ENCODE measurements at regions of chr14 and their contacts with region 1.

Region 1: GRCh38 chr14:65958664-65959562 is 527.3 kb upstream of the CCDC196 start:
- DNase-seq: peak in 1 of 2 experiments; percentile 50
- H3K4me3 ChIP-seq: no peak overlapping the region
- H3K27ac ChIP-seq: no peak overlapping the region
- H3K4me1 ChIP-seq: peaks cover 3 to 13% (median 9%) of the 10 kb centered on the region in 4 experiments
- H3K27me3 ChIP-seq: no peaks in the 10 kb centered on the region
- CTCF ChIP-seq: peak in 2 of 3 experiments; percentile 45 to 58; a peak in 2 of 4 replicates
- EP300 ChIP-seq: no peak
- POLR2A ChIP-seq: no peak
- RAD21 ChIP-seq: peak; percentile 61 to 72

Region 2: DNA sequence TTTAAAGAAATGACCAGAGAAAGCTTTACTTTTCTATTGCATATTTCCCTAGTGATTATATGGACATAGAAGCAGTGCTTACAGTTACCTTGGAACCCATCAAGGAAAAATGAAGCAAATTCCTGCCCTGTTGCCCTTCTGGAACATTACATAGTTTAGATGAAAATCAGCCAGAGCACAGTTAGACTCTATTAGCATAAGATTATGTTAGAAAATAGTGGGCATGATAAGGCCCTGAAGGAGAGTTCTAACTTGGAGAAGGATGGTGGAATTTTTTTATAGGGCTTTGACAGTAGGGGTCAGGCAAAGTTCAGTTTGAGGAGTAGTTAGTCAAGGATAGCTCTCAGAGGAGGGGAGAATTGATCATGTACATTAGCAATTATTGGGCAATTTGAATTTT is 472.0 kb before region 1 on chr14:
- CTCF ChIA-PET with region 1: interaction called, 15 read pairs
- POLR2A ChIA-PET with region 1: no interaction called
- DNase-seq: no peak
- H3K4me3 ChIP-seq: no peak overlapping the region
- H3K27ac ChIP-seq: no peak overlapping the region
- H3K4me1 ChIP-seq: peaks cover 0 to 13% (median 6%) of the 10 kb centered on the region in 4 experiments; a peak in 4 of 7 replicates
- H3K27me3 ChIP-seq: no peaks in the 10 kb centered on the region
- CTCF ChIP-seq: no peak
- EP300 ChIP-seq: no peak
- POLR2A ChIP-seq: no peak
- RAD21 ChIP-seq: peak; percentile 32 to 38

Region 3: GRCh38 chr14:65738339-65738738 is 220.6 kb before region 1 on chr14:
- CTCF ChIA-PET with region 1: no interaction called
- POLR2A ChIA-PET with region 1: no interaction called
- DNase-seq: no peak
- H3K4me3 ChIP-seq: no peak overlapping the region
- H3K27ac ChIP-seq: no peak overlapping the region
- H3K4me1 ChIP-seq: no peaks in the 10 kb centered on the region
- H3K27me3 ChIP-seq: no peaks in the 10 kb centered on the region; a peak in 1 of 7 replicates
- CTCF ChIP-seq: no peak
- EP300 ChIP-seq: no peak
- POLR2A ChIP-seq: no peak
- RAD21 ChIP-seq: no peak

Region 4: GRCh38 chr14:65832431-65833266 is 126.3 kb before region 1 on chr14:
- CTCF ChIA-PET with region 1: interaction called, 16 read pairs
- POLR2A ChIA-PET with region 1: no interaction called
- DNase-seq: no peak
- H3K4me3 ChIP-seq: no peak overlapping the region
- H3K27ac ChIP-seq: no peak overlapping the region
- H3K4me1 ChIP-seq: peaks cover 4 to 22% (median 8%) of the 10 kb centered on the region in 4 experiments; a peak in 6 of 7 replicates
- H3K27me3 ChIP-seq: no peaks in the 10 kb centered on the region
- CTCF ChIP-seq: peak in 2 of 3 experiments; percentile 23 to 30; a peak in 2 of 4 replicates
- EP300 ChIP-seq: no peak
- POLR2A ChIP-seq: no peak
- RAD21 ChIP-seq: peak in 1 of 2 experiments; percentile 33; a peak in 2 of 4 replicates

Region 5: DNA sequence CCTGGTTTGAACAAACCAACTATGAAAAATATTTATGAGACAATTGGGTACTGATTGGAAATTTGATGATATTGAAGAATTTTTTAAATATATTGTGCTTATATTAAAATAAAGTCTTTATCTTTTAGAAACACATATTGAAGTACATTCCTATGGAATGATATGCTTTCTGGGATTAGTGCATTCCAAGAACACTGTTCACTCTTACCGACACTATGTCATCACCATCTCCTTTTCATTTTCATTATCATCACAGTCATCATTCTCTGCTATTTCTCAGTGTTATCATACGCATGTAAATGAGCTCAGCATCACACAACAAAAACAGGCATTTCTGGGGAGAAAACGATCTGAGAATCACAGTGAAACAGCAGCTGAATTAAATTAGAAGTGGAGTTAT is 14.0 kb after region 1 on chr14:
- CTCF ChIA-PET with region 1: interaction called, 32 read pairs
- POLR2A ChIA-PET with region 1: no interaction called
- DNase-seq: no peak
- H3K4me3 ChIP-seq: no peak overlapping the region
- H3K27ac ChIP-seq: no peak overlapping the region
- H3K4me1 ChIP-seq: peaks cover 0 to 3% (median 0%) of the 10 kb centered on the region in 4 experiments; a peak in 1 of 7 replicates
- H3K27me3 ChIP-seq: no peaks in the 10 kb centered on the region
- CTCF ChIP-seq: no peak
- EP300 ChIP-seq: no peak
- POLR2A ChIP-seq: no peak
- RAD21 ChIP-seq: no peak

Region 6: DNA sequence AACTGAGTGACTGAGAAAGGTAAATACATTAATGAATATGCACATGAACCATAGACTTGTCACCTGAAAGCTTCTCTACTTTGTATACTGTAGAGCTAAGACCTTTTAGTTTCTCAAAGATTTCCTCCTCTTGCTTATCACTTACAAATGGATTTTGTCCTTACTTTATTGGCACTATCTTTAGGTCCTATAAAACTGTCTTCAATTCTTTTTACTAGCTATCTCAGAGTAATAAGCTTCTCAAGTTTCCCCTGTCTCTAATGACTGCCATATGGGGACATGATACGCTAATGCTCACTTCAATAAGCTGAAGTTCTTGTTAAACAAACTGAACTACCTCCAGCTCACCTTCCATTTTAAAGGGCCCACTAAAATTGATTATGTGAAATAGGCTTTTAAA is 59.0 kb after region 1 on chr14:
- CTCF ChIA-PET with region 1: interaction called, 11 read pairs
- POLR2A ChIA-PET with region 1: no interaction called
- DNase-seq: no peak
- H3K4me3 ChIP-seq: no peak overlapping the region
- H3K27ac ChIP-seq: no peak overlapping the region
- H3K4me1 ChIP-seq: no peaks in the 10 kb centered on the region
- H3K27me3 ChIP-seq: peaks cover 0 to 1% (median 0%) of the 10 kb centered on the region in 4 experiments; a peak in 1 of 7 replicates
- CTCF ChIP-seq: no peak
- EP300 ChIP-seq: no peak
- POLR2A ChIP-seq: no peak
- RAD21 ChIP-seq: no peak

Region 7: GRCh38 chr14:66070509-66071319 is 111.8 kb after region 1 on chr14:
- CTCF ChIA-PET with region 1: interaction called, 56 read pairs
- POLR2A ChIA-PET with region 1: no interaction called
- DNase-seq: peak; percentile 58 to 97
- H3K4me3 ChIP-seq: no peak overlapping the region
- H3K27ac ChIP-seq: no peak overlapping the region
- H3K4me1 ChIP-seq: no peaks in the 10 kb centered on the region
- H3K27me3 ChIP-seq: no peaks in the 10 kb centered on the region
- CTCF ChIP-seq: peak; percentile 80 to 89 (median 86)
- EP300 ChIP-seq: no peak
- POLR2A ChIP-seq: no peak
- RAD21 ChIP-seq: peak; percentile 95 to 96